Posterior cingulate gyrus (tissue), 11 donors: ENCODE measurements at regions of chr11 and their contacts with region 1.

Region 1: DNA sequence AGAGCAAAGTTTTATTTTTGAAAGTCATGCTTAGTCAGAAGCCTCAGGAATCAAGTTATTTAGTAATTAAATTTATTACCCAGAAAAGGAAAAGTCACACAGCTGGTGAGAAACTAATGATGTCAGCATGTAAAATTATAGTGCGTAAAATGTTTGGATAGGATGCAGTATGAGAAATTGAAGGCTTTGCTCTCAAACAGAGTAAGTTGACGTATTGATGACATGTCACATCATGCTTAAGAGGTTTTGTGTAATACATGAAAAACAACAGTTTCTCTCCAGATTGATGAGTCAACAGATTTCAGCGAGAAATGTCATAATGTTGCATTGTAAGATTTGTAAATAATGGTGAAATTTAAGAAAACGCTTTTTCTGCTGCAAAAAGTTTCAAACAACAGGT is 769.8 kb downstream of the METTL15 start:
- DNase-seq: no peak

Region 2: GRCh38 chr11:28058333-28058732 is 819.7 kb before region 1 on chr11:
- intact Hi-C with region 1: no loop called
- DNase-seq: peak in 1 of 10 donors; percentile 6

Region 3: DNA sequence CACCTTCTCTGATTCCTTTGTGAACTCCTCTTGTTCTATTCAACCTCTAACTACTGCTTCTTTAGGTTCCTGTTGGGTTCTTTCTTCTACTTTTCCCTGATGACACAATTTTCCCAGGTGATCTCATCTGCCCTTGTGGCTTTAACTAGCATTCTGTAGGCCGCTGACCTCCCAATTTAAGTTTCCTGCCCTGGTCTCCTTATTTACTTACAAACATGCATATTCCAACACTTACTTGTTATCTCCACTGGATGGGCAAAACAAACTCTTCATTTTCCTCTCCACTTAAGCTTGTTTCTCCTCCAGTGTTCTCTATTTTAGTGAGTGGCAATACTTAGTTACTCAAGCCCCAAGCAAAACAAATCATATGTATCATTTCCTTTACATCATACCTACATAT is 35.3 kb before region 1 on chr11:
- intact Hi-C with region 1: no loop called
- DNase-seq: no peak

Region 4: DNA sequence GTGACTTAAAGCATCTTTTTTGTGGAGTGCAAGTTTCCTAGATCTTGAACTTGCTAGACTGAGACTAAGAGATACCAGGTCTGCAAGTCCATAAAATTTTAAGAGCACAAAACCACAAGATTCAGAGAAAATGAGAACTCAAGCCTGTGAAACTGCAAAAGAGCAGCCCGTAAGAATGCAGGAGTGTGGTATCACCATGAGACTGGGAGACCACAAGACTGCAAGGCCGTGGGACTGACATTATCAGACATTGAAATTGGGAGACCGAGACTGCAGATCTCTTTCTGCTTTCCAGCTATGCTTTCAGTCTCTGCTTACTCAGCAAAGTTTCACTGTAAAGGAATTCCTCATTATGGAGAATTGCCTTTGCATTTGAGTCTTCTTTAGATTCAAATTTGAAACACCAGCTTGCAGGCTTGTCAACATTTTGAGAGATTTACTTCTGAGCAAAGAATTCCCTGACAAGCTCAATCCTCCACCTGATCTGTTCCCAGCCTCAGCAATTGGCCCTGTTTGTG is 517.6 kb after region 1 on chr11:
- intact Hi-C with region 1: loop called (anchors 10 kb)
- DNase-seq: no peak